ENCODE measurements at regions of chr1 and their contacts with region 1.

Region 1: GRCh38 chr1:97920832-97921571 is at the start of gene DPYD:
- DNase-seq: peak; percentile 81
- H3K4me3 Mint-ChIP-seq: peak within 1 kb of the TSS; percentile 93
- H3K27ac Mint-ChIP-seq: peak within 1 kb of the TSS; percentile 93
- H3K4me1 Mint-ChIP-seq: peaks cover 66% of the 10 kb centered on the region
- H3K27me3 Mint-ChIP-seq: no peaks in the 10 kb centered on the region
- total RNA-seq, gene DPYD: 16.2 and 17.9 TPM in 2 replicates

Region 2: DNA sequence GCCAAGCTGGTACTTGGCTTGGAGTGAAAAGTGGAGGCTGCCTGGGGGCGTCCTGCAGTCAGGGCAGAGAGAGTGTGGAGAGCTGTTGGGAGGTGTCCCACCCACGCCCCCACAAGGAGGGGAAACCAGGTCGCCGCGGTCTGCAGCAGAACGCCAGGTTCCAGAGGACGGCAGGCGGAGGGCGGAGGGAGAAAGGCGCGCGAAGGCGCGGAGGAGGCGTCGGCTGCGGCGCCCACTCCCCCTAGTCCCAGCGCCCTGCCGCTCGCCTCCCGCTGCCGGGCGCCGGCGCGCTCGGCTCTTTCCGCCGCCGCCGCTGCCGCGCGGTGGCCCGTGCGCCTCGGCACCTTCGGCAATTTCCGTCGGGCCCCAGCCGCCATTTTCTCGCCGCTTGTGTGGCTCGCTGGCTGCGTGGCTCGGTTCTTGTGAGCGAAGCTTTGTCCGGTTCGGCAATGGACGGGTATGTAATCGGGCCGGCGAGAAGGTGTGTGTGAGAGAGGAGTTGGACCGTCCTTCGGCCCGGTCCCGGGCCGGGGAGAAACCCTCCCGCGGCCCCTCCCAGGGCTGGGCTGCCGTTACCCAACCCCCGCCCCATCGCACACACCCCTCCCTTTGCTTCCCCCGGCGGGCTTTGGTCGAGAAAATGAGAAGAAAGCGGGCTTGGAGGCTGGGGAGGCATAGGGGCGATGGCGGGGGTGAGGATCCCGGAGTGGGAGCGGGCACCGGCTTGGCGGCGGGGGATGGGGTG is 1199.4 kb before region 1 on chr1 and contains the start of gene PTBP2:
- intact Hi-C with region 1: loop called (anchors 5 kb)
- DNase-seq: peak; percentile 79
- H3K4me3 Mint-ChIP-seq: peak within 1 kb of the TSS; percentile 95
- H3K27ac Mint-ChIP-seq: peak within 1 kb of the TSS; percentile 94
- H3K4me1 Mint-ChIP-seq: peaks cover 22% of the 10 kb centered on the region
- H3K27me3 Mint-ChIP-seq: peaks cover 15% of the 10 kb centered on the region
- total RNA-seq, gene PTBP2: 17.7 and 19.7 TPM in 2 replicates

Region 3: DNA sequence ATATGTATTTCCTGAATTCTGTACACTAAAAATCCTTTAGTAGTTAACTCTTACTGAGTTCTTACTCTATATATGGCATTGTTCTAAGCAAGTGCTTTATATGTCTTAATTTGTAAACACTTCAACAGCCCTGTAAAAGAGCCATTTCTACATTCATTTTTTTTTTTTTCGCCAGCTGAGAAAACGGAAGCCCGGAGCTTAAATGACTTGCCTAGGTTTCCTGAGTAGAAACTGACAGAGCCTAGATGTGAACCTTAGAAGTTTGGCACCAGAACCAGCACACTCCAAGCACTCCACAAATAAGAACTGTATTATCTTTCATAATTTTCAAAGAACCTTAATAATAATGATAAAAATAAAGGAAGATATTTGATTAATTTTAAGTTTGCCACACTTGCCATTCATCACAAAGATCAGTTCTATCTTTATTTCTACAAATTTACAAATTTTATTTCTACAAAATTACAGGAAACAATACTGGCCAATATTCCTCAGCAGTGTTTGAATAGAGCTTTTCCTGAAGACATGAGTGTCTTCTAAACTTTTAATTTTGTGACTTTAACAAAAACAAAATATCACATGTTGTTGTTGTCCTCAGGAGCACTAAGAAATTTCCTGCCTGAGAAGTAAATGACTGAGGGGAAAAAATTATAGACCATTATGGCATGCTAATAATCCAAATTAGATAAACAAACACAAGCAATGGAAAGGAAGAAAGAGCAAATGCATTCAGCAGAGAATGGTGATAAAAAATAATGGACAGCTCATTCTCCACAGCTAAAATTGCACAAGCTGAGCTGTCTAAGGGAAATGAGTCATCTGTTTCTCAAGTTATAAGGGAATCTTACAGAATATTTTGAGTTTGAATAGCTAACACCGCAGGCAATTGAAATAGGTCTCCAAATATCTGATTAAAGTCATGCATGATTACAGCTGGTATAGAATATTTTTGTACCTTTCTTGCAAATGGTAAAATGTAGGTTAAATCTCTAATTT is 71.4 kb before region 1 on chr1:
- intact Hi-C with region 1: loop called (anchors 5 kb)
- DNase-seq: no peak
- H3K4me3 Mint-ChIP-seq: no peak overlapping the region
- H3K27ac Mint-ChIP-seq: no peak overlapping the region
- H3K4me1 Mint-ChIP-seq: peaks cover 11% of the 10 kb centered on the region
- H3K27me3 Mint-ChIP-seq: no peaks in the 10 kb centered on the region

Region 4: GRCh38 chr1:97943354-97943753 is 22.4 kb after region 1 on chr1:
- intact Hi-C with region 1: loop called (anchors 1 kb)
- DNase-seq: no peak
- H3K4me3 Mint-ChIP-seq: peak overlapping the region; percentile 34
- H3K27ac Mint-ChIP-seq: peak overlapping the region; percentile 22
- H3K4me1 Mint-ChIP-seq: peaks cover 35% of the 10 kb centered on the region
- H3K27me3 Mint-ChIP-seq: peaks cover 11% of the 10 kb centered on the region

Region 5: GRCh38 chr1:98405581-98406059 is 484.6 kb after region 1 on chr1:
- intact Hi-C with region 1: loop called (anchors 5 kb)
- DNase-seq: no peak
- H3K4me3 Mint-ChIP-seq: peak overlapping the region; percentile 75
- H3K27ac Mint-ChIP-seq: peak overlapping the region; percentile 87
- H3K4me1 Mint-ChIP-seq: peaks cover 52% of the 10 kb centered on the region
- H3K27me3 Mint-ChIP-seq: peaks cover 2% of the 10 kb centered on the region

Measured in activated T-helper 1 cell treated with anti-CD3 and anti-CD28 coated beads, Interleukin-12 subunit alpha, Interleukin-12 subunit beta, Interleukin-2, Interleukin-4 antibody, amounts not matched to agents 30 ng/mL and 10 ng/mL and 1 ng/mL, durations not matched to agents 14 hours and 24 hours and 36 hours (primary cell).